ENCODE measurements at regions of chr13 and their contacts with region 1.

Region 1: GRCh38 chr13:83469629-83470028 is 412.6 kb downstream of the SLITRK1 start:
- DNase-seq: no peak
- ATAC-seq: no peak
- H3K4me3 ChIP-seq: no peak overlapping the region
- H3K27ac ChIP-seq: no peak overlapping the region
- H3K4me1 ChIP-seq: no peaks in the 10 kb centered on the region
- H3K27me3 ChIP-seq: no peaks in the 10 kb centered on the region
- CTCF ChIP-seq: no peak
- EP300 ChIP-seq: no peak
- POLR2A ChIP-seq: no peak
- RAD21 ChIP-seq: no peak

Region 2: GRCh38 chr13:83325125-83325853 is 144.3 kb before region 1 on chr13:
- CTCF ChIA-PET with region 1: no interaction called
- POLR2A ChIA-PET with region 1: no interaction called
- in situ Hi-C with region 1: no loop called
- intact Hi-C with region 1: no loop called
- DNase-seq: no peak
- ATAC-seq: no peak
- H3K4me3 ChIP-seq: no peak overlapping the region
- H3K27ac ChIP-seq: no peak overlapping the region
- H3K4me1 ChIP-seq: no peaks in the 10 kb centered on the region
- H3K27me3 ChIP-seq: no peaks in the 10 kb centered on the region
- CTCF ChIP-seq: no peak
- EP300 ChIP-seq: no peak
- POLR2A ChIP-seq: no peak
- RAD21 ChIP-seq: no peak

Region 3: DNA sequence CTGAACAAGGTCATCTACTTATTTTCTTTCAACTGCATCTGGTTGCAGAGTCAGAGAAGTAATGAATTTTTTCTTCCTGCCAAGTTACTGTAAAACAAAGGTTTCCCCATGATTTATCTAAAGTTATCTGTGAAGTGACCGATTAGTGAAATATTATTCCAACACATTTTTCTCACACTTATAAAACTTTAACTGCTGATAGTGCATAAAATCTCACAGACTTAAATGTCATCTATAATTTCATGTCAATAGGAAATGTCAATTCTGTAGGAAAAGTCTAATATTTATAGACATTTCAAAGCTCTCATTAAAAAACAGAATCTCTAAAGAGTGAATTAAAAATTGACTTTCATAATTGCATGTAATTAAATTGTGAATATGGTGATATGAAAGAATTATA is 15.5 kb after region 1 on chr13:
- CTCF ChIA-PET with region 1: no interaction called
- POLR2A ChIA-PET with region 1: no interaction called
- in situ Hi-C with region 1: no loop called
- intact Hi-C with region 1: loop called (anchors 2 kb)
- DNase-seq: no peak
- ATAC-seq: no peak
- H3K4me3 ChIP-seq: no peak overlapping the region
- H3K27ac ChIP-seq: no peak overlapping the region
- H3K4me1 ChIP-seq: no peaks in the 10 kb centered on the region
- H3K27me3 ChIP-seq: no peaks in the 10 kb centered on the region
- CTCF ChIP-seq: no peak
- EP300 ChIP-seq: no peak
- POLR2A ChIP-seq: no peak
- RAD21 ChIP-seq: no peak

Measured in HepG2 (cell line).